CD4-positive, alpha-beta memory T cell (primary cell): ENCODE measurements at regions of chr2 and their contacts with region 1.

Region 1: DNA sequence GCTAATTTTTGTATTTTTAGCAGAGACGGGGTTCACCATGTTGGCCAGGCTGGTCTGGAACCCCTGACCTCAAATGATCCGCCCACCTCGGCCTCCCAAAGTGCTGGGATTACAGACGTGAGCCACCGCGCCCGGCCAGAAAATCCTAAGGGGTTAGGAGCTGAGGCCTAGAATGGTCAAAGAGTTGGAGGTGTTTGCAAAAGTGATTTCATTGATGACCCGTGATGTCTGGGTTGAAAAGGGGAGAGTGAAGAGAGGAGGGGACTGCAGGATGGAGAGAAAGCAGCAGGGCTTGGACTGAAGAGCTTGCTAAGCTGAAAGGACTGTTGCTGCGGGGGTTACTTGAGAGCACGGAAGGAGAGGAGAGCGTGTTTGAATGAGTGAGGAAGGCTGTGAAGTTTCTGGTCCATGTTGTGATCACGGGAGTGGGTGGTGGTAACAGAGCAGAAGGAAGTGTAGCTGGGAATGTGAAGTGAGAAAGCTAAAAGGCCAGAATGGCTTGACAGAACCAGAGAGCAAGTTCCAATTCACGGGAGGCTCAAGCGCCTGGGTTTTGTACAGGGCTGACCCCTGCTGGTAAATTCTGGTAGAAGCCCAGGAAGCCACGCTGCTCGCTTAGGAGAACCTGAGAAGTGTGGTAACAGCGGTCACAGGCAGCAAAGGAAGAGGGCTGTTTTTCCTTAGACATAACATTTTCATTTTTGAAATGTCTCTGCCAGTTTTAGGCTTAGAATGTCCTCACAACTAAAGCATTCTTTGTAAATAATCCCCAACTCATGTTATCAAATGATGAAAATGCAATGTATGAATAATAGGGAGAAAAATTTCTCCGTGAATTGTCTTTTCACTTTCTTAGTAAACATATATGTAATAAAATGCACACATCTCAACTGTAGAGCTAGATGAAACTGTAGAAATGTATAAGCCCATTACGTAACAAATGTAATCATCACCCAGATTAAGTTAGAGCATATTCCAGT is 40.5 kb upstream of the ACTR2 start:
- DNase-seq: peak; percentile 49 to 59 (median 53)
- H3K4me3 ChIP-seq: no peak overlapping the region
- H3K4me3 Mint-ChIP-seq: peak overlapping the region in 2 of 8 donors; percentile 1 to 14
- H3K27ac ChIP-seq: no peak overlapping the region
- H3K27ac Mint-ChIP-seq: no peak overlapping the region
- H3K4me1 ChIP-seq: peaks cover 9% of the 10 kb centered on the region
- H3K4me1 Mint-ChIP-seq: peaks cover 0 to 8% (median 8%) of the 10 kb centered on the region in 4 donors
- H3K27me3 ChIP-seq: peaks cover 4% of the 10 kb centered on the region
- H3K27me3 Mint-ChIP-seq: peaks cover 5 to 17% of the 10 kb centered on the region in 2 donors

Region 2: GRCh38 chr2:65064728-65065552 is 122.2 kb before region 1 on chr2:
- CTCF ChIA-PET with region 1: interaction called, 36 read pairs
- POLR2A ChIA-PET with region 1: no interaction called
- intact Hi-C with region 1: loop called (anchors 1 kb)
- DNase-seq: peak; percentile 55 to 63 (median 57)
- H3K4me3 ChIP-seq: no peak overlapping the region
- H3K4me3 Mint-ChIP-seq: peak overlapping the region in 3 of 8 donors; percentile 29 to 35 (median 31)
- H3K27ac ChIP-seq: no peak overlapping the region
- H3K27ac Mint-ChIP-seq: peak overlapping the region in 6 of 7 donors; percentile 2 to 66 (median 22)
- H3K4me1 ChIP-seq: peaks cover 44% of the 10 kb centered on the region
- H3K4me1 Mint-ChIP-seq: peaks cover 20 to 76% (median 38%) of the 10 kb centered on the region in 4 donors
- H3K27me3 ChIP-seq: no peaks in the 10 kb centered on the region
- H3K27me3 Mint-ChIP-seq: no peaks in the 10 kb centered on the region

Region 3: GRCh38 chr2:65436169-65436823 is 249.1 kb after region 1 on chr2:
- CTCF ChIA-PET with region 1: no interaction called
- POLR2A ChIA-PET with region 1: no interaction called
- intact Hi-C with region 1: no loop called
- DNase-seq: peak in 4 of 5 donors; percentile 21 to 42 (median 26)
- H3K4me3 ChIP-seq: peak overlapping the region; percentile 42 to 52
- H3K4me3 Mint-ChIP-seq: peak overlapping the region; percentile 81 to 95 (median 92)
- H3K27ac ChIP-seq: no peak overlapping the region
- H3K27ac Mint-ChIP-seq: peak overlapping the region in 3 of 7 donors; percentile 36 to 86 (median 74)
- H3K4me1 ChIP-seq: peaks cover 25% of the 10 kb centered on the region
- H3K4me1 Mint-ChIP-seq: peaks cover 6 to 32% (median 14%) of the 10 kb centered on the region in 4 donors
- H3K27me3 ChIP-seq: peaks cover 10% of the 10 kb centered on the region
- H3K27me3 Mint-ChIP-seq: peaks cover 22 to 26% of the 10 kb centered on the region in 2 donors